Activated B cell treated with CpG ODN at 0.5 μM for 24 hours (primary cell): ENCODE measurements at regions of chr6 and their contacts with region 1.

Region 1: DNA sequence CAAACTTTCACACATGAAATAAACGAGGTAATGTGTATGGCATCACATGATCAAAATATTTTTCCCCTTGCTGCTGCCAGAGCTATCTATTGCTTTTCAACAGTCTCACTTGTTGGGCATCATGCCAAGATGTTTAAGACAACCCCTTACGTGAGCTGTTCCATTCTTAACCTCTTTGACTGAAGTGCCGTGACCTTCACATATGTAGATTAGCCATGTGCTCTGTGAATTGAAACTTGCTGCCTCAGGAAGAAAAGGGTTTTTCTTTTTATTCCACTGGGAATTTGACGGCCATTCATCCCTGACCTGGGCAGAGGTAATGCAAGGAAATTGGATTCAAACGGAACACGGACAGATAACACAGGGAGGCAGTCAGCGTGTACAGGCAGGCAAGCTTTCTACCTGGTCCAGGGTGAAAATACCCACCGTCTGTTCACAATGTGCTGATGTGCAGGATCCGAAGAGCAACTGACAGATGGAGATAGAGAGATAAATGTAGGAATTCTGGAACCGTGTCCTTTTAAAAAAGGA is 14.2 kb downstream of the ARID1B start:
- DNase-seq: no peak
- ATAC-seq: peak; percentile 74
- H3K4me3 Mint-ChIP-seq: peak overlapping the region; percentile 77
- H3K27ac Mint-ChIP-seq: peak overlapping the region; percentile 86
- H3K4me1 Mint-ChIP-seq: peaks cover 100% of the 10 kb centered on the region
- H3K27me3 Mint-ChIP-seq: no peaks in the 10 kb centered on the region
- CTCF ChIP-seq: no peak

Region 2: DNA sequence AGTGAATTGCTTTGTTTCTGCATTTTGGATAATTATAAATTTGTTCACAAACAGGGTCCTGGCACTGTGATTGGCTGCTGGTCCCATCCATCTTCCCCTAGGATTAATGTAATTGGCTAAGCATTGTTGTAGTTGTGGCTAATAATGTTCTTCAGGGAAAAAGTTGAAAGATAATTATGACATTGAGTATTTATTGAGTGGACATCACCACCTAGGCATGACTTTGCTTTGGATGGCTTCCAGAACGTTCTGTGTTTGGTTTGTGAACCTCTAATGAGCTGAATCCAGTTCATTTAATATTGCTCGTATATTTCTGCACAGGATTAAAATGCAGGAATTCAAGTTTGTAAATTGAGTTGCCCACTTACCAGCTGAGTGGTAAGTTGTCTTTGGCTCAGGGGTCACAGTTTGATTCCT is 40.9 kb after region 1 on chr6:
- CTCF ChIA-PET with region 1: no interaction called
- POLR2A ChIA-PET with region 1: interaction called, 18 read pairs
- intact Hi-C with region 1: no loop called
- DNase-seq: no peak
- ATAC-seq: no peak
- H3K4me3 Mint-ChIP-seq: no peak overlapping the region
- H3K27ac Mint-ChIP-seq: peak overlapping the region; percentile 24
- H3K4me1 Mint-ChIP-seq: peaks cover 54% of the 10 kb centered on the region
- H3K27me3 Mint-ChIP-seq: no peaks in the 10 kb centered on the region
- CTCF ChIP-seq: no peak

Region 3: GRCh38 chr6:156857573-156857972 is 66.2 kb after region 1 on chr6:
- CTCF ChIA-PET with region 1: no interaction called
- POLR2A ChIA-PET with region 1: no interaction called
- intact Hi-C with region 1: no loop called
- DNase-seq: no peak
- ATAC-seq: peak; percentile 34
- H3K4me3 Mint-ChIP-seq: no peak overlapping the region
- H3K27ac Mint-ChIP-seq: peak overlapping the region; percentile 10
- H3K4me1 Mint-ChIP-seq: peaks cover 88% of the 10 kb centered on the region
- H3K27me3 Mint-ChIP-seq: no peaks in the 10 kb centered on the region
- CTCF ChIP-seq: no peak

Region 4: GRCh38 chr6:156890627-156891314 is 99.4 kb after region 1 on chr6:
- CTCF ChIA-PET with region 1: no interaction called
- POLR2A ChIA-PET with region 1: interaction called, 11 read pairs
- intact Hi-C with region 1: no loop called
- DNase-seq: no peak
- ATAC-seq: no peak
- H3K4me3 Mint-ChIP-seq: no peak overlapping the region
- H3K27ac Mint-ChIP-seq: no peak overlapping the region
- H3K4me1 Mint-ChIP-seq: peaks cover 68% of the 10 kb centered on the region
- H3K27me3 Mint-ChIP-seq: no peaks in the 10 kb centered on the region
- CTCF ChIP-seq: no peak

Region 5: GRCh38 chr6:156976216-156977127 is 185.1 kb after region 1 on chr6:
- CTCF ChIA-PET with region 1: no interaction called
- POLR2A ChIA-PET with region 1: no interaction called
- intact Hi-C with region 1: loop called (anchors 5 kb)
- DNase-seq: no peak
- ATAC-seq: peak; percentile 69
- H3K4me3 Mint-ChIP-seq: peak overlapping the region; percentile 79
- H3K27ac Mint-ChIP-seq: peak overlapping the region; percentile 84
- H3K4me1 Mint-ChIP-seq: peaks cover 94% of the 10 kb centered on the region
- H3K27me3 Mint-ChIP-seq: no peaks in the 10 kb centered on the region
- CTCF ChIP-seq: no peak

Region 6: GRCh38 chr6:157075549-157076450 is 284.4 kb after region 1 on chr6:
- CTCF ChIA-PET with region 1: no interaction called
- POLR2A ChIA-PET with region 1: no interaction called
- intact Hi-C with region 1: no loop called
- DNase-seq: no peak
- ATAC-seq: peak; percentile 66
- H3K4me3 Mint-ChIP-seq: peak overlapping the region; percentile 71
- H3K27ac Mint-ChIP-seq: peak overlapping the region; percentile 83
- H3K4me1 Mint-ChIP-seq: peaks cover 86% of the 10 kb centered on the region
- H3K27me3 Mint-ChIP-seq: no peaks in the 10 kb centered on the region
- CTCF ChIP-seq: no peak

Region 7: DNA sequence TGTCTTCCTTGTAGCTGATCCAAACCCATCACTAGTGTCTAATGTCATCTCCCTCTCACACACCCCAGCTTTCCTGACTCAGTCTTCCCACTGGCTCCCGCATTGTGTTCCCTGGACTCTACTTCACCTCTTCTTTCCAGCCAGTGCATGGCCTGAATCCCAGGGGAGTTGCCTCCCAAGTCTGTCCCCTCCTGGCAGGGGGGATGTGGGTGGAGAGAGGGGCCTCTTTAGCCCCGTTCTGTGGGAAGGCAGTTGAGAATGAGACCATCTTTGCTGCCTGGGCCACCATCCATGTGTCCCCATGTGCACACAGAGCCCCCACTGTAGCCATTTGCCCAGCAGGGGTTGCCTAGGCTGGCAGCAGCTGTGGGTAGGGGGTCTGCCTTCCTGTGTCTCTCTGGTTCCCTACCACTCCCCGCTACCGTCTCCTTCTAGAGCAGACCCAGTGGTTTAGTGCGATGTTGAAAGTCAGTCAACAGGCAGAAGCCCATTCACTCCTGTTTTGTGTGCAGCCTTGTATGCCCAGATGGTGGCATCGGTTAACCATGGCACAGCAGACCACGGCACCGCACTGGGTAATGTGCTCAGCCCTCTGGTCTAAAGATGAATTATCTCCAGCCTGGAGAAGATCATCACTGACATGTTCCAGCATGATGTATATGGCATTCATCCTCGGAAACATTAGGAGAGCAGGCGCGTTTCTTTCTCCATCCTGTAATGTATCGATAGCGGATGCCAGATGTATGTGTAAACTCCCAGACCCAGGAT is 852.8 kb after region 1 on chr6:
- CTCF ChIA-PET with region 1: no interaction called
- POLR2A ChIA-PET with region 1: no interaction called
- intact Hi-C with region 1: no loop called
- DNase-seq: no peak
- ATAC-seq: no peak
- H3K4me3 Mint-ChIP-seq: no peak overlapping the region
- H3K27ac Mint-ChIP-seq: no peak overlapping the region
- H3K4me1 Mint-ChIP-seq: peaks cover 6% of the 10 kb centered on the region
- H3K27me3 Mint-ChIP-seq: no peaks in the 10 kb centered on the region
- CTCF ChIP-seq: no peak